Ascending aorta (tissue), 2 donors: ENCODE measurements at regions of chr11 and their contacts with region 1.

Region 1: DNA sequence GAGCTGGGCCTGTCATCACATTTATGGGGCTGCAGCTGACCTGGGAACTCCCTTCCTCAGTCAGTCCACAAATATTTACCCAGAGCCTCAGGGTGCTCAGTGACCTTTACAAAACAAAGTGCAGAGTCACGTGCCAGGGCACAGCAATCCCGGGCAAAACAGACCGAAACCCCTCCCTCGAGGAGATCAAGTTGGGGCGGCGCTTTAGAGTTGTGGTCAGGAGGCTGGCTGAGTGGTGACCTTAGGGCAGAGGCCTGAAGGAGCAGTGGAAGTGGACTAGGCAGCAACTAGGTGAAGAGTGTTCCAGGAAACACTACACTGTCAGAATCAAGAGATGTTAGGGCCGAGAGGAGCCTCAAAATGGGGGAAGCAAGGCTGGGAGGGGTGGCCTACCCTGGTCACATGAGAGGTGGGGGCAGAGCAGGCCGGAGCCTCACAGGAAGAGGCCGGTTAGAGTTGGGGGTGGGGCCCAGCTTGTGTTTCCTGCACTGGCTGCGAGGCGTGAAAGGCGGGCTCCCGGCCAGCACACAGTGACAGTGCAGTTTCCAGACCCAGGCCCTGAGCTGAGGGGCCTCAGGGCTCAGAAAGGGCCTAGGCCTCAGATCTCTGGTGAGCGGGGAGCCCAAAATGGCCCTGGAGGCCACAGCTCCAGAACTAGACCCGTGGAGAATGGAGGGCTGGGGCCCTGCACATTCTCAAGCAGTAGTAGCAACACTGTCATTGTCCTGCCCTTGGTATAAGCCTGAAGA is 3.7 kb upstream of the NEAT1 start:
- DNase-seq: peak; percentile 94 to 98
- H3K4me3 ChIP-seq: peak overlapping the region; percentile 56 to 80
- H3K27ac ChIP-seq: peak overlapping the region; percentile 97 to 99
- H3K4me1 ChIP-seq: peaks cover 32 to 46% of the 10 kb centered on the region in 2 donors
- H3K27me3 ChIP-seq: no peaks in the 10 kb centered on the region
- CTCF ChIP-seq: no peak

Region 2: GRCh38 chr11:65366340-65366773 is 52.5 kb before region 1 on chr11:
- intact Hi-C with region 1: loop called (anchors 2 kb)
- DNase-seq: no peak
- H3K4me3 ChIP-seq: no peak overlapping the region
- H3K27ac ChIP-seq: no peak overlapping the region
- H3K4me1 ChIP-seq: peaks cover 0 to 7% of the 10 kb centered on the region in 2 donors
- H3K27me3 ChIP-seq: no peaks in the 10 kb centered on the region
- CTCF ChIP-seq: peak; percentile 76 to 86 (median 82)

Region 3: DNA sequence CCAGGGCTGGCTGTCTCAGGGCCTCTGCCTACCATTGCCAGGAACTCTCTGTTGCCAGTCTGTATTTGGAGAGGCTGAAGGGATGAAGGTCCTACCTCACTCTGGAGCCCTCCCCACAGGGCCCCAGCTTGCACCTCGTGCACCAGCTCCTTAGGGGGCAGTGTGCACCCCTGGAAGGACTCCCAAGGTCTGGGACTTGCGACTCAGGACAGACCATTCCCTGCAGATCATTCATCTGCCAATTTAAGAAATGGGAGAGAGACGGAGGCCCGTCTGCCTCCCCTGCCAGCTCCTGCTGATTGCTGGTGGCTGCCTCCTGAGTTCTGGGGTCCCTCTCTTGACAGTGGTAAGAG is 52.5 kb after region 1 on chr11:
- intact Hi-C with region 1: loop called (anchors 1 kb)
- DNase-seq: peak; percentile 57 to 93
- H3K4me3 ChIP-seq: peak overlapping the region; percentile 41 to 54
- H3K27ac ChIP-seq: peak overlapping the region; percentile 97 to 98
- H3K4me1 ChIP-seq: peaks cover 19 to 35% of the 10 kb centered on the region in 2 donors
- H3K27me3 ChIP-seq: no peaks in the 10 kb centered on the region
- CTCF ChIP-seq: peak; percentile 63 to 67 (median 64)

Region 4: DNA sequence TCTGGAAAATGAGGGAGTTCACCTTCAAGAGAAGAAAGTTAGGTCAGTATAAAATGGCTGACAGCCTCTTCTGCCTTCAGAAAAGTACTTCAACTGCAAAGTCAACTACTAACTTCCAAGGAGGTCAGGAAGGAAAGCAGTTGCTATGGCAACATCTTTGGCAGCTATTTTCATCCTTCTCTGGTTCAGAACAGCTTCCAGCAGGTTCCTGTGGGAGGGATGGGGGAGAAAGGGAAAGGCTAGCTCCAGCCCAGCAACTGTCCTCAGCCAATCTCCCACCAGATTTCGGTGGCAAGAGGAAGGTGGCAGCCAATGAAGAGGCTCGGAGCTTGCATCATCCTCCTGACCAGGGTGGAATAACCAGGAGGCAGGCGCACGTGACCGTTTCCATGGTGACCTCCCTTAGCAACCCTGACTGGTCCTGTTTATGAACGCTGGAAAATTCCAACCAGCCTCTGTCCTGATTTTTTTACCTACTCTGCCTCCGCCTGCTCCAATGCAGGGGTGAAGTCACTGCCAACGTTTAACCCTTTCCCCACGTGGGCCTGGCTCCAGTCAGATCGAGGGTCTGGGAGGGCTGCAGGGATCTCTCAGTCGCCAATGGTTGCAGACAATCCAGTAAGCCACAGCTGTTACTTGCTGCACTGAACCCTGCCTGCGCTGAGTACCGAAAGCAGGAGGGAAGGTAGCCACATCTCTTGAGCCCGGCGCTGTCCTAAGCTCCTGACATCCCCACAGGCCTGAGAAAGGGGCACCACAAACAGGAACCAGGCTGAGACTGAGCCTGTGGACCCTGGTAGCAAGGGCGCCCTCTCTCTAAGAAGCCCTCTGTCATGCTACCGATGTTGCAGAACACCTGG is 68.8 kb after region 1 on chr11:
- intact Hi-C with region 1: loop called (anchors 2 kb)
- DNase-seq: peak; percentile 99 to 100
- H3K4me3 ChIP-seq: peak overlapping the region; percentile 42 to 51
- H3K27ac ChIP-seq: peak overlapping the region; percentile 97 to 99
- H3K4me1 ChIP-seq: peaks cover 50 to 75% of the 10 kb centered on the region in 2 donors
- H3K27me3 ChIP-seq: no peaks in the 10 kb centered on the region
- CTCF ChIP-seq: no peak

Region 5: DNA sequence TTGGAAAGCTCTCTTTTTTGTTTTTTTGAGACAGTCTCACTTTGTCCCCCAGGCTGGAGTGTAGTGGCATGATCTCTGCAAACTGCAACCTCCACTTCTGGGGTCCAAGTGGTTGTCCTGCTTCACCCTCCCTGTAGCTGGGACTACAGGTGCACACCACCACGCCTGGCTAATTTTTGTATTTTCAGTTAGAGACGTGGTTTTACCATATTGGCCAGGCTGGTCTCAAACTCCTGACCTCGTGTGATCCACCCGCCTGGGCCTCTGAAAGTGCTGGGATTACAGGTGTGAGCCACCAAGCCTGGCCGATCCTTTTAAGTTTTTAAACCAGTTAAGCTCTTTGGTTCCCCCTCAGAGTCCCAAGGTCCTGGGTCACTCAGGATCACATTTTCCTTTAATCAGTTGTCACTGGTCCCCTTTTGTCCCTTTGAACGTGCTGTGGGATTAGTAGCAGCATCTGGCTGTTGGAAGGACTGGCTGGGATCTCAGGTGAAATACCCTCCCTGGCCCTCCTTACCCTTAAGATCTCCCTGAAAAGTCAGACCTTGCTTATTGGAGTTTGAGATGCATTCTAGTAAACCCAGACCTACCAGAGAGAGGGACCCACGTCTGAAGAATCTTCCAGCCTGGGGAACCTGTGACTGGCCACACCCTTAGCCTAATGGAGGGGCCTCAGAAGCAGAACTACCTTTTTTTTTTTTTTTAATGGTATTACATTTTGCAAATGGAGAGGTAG is 88.1 kb after region 1 on chr11:
- intact Hi-C with region 1: loop called (anchors 1 kb)
- DNase-seq: peak in 1 of 2 donors; percentile 78
- H3K4me3 ChIP-seq: peak overlapping the region; percentile 62 to 67
- H3K27ac ChIP-seq: peak overlapping the region; percentile 81 to 95
- H3K4me1 ChIP-seq: peaks cover 6 to 19% of the 10 kb centered on the region in 2 donors
- H3K27me3 ChIP-seq: no peaks in the 10 kb centered on the region
- CTCF ChIP-seq: no peak